ENCODE measurements at regions of chr12 and their contacts with region 1.

Region 1: DNA sequence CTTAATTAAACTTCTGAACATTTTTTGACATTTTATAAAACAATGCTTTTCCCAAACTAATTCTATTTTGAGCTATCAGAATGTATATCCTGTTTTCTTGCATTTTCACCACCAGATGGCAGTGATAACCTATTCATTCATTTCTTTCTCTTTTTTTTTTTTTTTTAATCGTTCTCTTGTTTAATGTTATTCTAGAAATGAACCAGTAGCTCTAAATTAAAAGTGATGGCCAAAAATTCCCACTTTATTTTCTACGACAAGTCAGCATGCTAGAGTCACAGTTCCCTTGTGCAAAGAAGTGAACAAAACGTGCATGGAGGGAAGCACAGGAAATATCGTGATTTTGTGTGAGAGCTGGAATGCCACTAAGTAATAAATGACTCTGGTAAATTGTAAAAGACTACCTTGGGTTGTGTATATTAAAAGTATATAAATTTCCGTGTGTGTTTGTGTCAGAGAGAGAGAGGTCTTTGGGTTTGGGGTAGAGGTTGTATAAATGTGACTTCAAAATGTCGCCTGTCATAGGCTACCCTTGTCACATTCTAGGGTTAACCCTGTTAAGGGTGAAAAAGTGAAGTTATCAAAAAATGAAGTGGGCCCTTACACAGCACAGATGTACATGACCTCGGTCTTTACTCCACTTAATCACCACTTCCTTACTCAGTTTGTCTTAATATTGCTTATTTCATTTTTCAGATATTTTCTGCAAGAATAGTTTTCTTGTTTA is 40.4 kb upstream of the LDHB start:
- DNase-seq: no peak
- ATAC-seq: peak; percentile 16
- H3K4me3 ChIP-seq: peak overlapping the region; percentile 12
- H3K27ac ChIP-seq: no peak overlapping the region
- H3K4me1 ChIP-seq: peaks cover 9% of the 10 kb centered on the region
- H3K27me3 ChIP-seq: no peaks in the 10 kb centered on the region
- CTCF ChIP-seq: peak; percentile 65

Region 2: GRCh38 chr12:21585485-21585884 is 112.6 kb before region 1 on chr12:
- intact Hi-C with region 1: no loop called
- DNase-seq: no peak
- ATAC-seq: no peak
- H3K4me3 ChIP-seq: no peak overlapping the region
- H3K27ac ChIP-seq: no peak overlapping the region
- H3K4me1 ChIP-seq: no peaks in the 10 kb centered on the region
- H3K27me3 ChIP-seq: no peaks in the 10 kb centered on the region
- CTCF ChIP-seq: no peak

Region 3: GRCh38 chr12:21989819-21990412 is 291.8 kb after region 1 on chr12:
- intact Hi-C with region 1: loop called (anchors 5 kb)
- DNase-seq: no peak
- ATAC-seq: peak; percentile 22
- H3K4me3 ChIP-seq: no peak overlapping the region
- H3K27ac ChIP-seq: no peak overlapping the region
- H3K4me1 ChIP-seq: no peaks in the 10 kb centered on the region
- H3K27me3 ChIP-seq: no peaks in the 10 kb centered on the region
- CTCF ChIP-seq: peak; percentile 53

Measured in upper lobe of right lung (tissue), 1 donor.